ENCODE measurements at regions of chr6 and their contacts with region 1.

Region 1: DNA sequence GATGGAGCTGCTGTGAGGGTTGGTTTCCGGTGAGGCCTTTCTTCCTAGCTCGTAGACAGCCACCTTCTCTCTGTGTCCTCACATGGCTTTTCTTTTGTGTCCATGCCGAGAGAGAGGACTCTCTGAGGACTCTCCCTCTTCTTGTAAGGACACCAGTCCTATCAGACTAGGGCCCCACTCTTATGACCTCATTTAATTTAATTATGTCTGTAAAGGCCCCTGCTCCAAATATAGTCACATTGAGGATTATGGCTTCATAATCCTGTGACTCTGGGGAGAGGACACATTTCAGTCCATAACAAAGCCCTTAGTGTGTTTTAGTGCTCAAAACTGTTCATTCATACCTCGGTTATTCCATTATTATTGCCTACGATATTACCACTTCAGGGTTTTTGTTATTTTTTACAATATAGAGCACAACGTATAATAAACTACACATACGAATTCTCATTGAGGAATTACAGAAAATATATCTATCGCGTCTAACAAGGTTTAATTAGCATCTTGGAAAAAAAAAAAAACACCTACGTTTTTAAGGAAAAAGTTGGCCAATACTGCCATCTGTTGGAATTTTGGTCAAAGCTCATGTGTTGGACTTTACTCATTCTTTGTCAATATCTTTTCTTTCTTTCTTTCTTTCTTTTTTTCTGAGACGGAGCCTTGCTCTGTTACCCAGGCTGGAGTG is 20.0 kb upstream of the TFAP2A start:
- DNase-seq: peak; percentile 24
- H3K4me3 ChIP-seq: peak overlapping the region in 1 of 2 experiments; percentile 45; a peak in 2 of 4 replicates
- H3K27ac ChIP-seq: no peak overlapping the region
- H3K4me1 ChIP-seq: no peaks in the 10 kb centered on the region
- H3K27me3 ChIP-seq: no peaks in the 10 kb centered on the region; the same call in 1 of the 2 replicates
- CTCF ChIP-seq: peak; percentile 83
- EP300 ChIP-seq: no peak
- RAD21 ChIP-seq: peak; percentile 73

Region 2: GRCh38 chr6:10030942-10031537 is 403.8 kb before region 1 on chr6:
- CTCF ChIA-PET with region 1: interaction called, 10 read pairs
- POLR2A ChIA-PET with region 1: no interaction called
- DNase-seq: peak; percentile 3
- H3K4me3 ChIP-seq: no peak overlapping the region
- H3K27ac ChIP-seq: no peak overlapping the region
- H3K4me1 ChIP-seq: no peaks in the 10 kb centered on the region
- H3K27me3 ChIP-seq: no peaks in the 10 kb centered on the region
- CTCF ChIP-seq: peak; percentile 70
- EP300 ChIP-seq: no peak
- RAD21 ChIP-seq: peak; percentile 44

Region 3: GRCh38 chr6:10177703-10178102 is 257.1 kb before region 1 on chr6:
- CTCF ChIA-PET with region 1: no interaction called
- POLR2A ChIA-PET with region 1: no interaction called
- DNase-seq: no peak
- H3K4me3 ChIP-seq: no peak overlapping the region
- H3K27ac ChIP-seq: no peak overlapping the region
- H3K4me1 ChIP-seq: no peaks in the 10 kb centered on the region
- H3K27me3 ChIP-seq: no peaks in the 10 kb centered on the region; the same call in 1 of the 2 replicates
- CTCF ChIP-seq: no peak
- EP300 ChIP-seq: no peak
- RAD21 ChIP-seq: no peak

Region 4: GRCh38 chr6:10414766-10415592 is 19.9 kb before region 1 on chr6 and contains the start of gene TFAP2A:
- CTCF ChIA-PET with region 1: interaction called, 11 read pairs
- POLR2A ChIA-PET with region 1: no interaction called
- DNase-seq: no peak
- H3K4me3 ChIP-seq: peak within 1 kb of the TSS in 1 of 2 experiments; percentile 32; a peak in 1 of 4 replicates
- H3K27ac ChIP-seq: no peak within 1 kb of the TSS
- H3K4me1 ChIP-seq: peaks cover 0 to 2% of the 10 kb centered on the region in 2 experiments; a peak in 2 of 4 replicates
- H3K27me3 ChIP-seq: peaks cover 94% of the 10 kb centered on the region
- CTCF ChIP-seq: peak; percentile 23
- EP300 ChIP-seq: no peak
- RAD21 ChIP-seq: no peak
- polyA plus RNA-seq, gene TFAP2A: 0.02 and 0.07 TPM in 2 replicates

Region 5: DNA sequence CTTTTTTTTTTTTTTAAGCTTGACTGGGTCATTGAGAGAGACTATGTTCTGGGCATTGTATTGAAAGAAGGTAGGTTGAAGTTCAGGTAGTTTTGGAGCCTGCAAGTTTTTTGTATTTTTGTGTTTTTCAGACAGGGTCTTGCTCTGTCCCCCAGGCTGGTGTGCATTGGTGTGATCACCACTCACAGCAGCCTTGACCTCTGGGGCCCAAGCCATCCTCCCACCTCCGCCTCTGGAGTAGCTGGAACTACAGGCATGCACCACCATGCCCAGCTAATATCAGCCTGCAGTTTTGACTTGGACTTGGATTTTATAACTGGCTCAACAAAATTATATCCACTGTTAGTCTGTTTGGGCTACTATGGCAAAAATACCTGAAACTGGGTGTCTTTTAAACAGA is 11.7 kb after region 1 on chr6:
- CTCF ChIA-PET with region 1: interaction called, 13 read pairs
- POLR2A ChIA-PET with region 1: no interaction called
- DNase-seq: no peak
- H3K4me3 ChIP-seq: no peak overlapping the region
- H3K27ac ChIP-seq: no peak overlapping the region
- H3K4me1 ChIP-seq: peaks cover 0 to 3% of the 10 kb centered on the region in 2 experiments; a peak in 1 of 4 replicates
- H3K27me3 ChIP-seq: no peaks in the 10 kb centered on the region
- CTCF ChIP-seq: no peak
- EP300 ChIP-seq: no peak
- RAD21 ChIP-seq: no peak

Region 6: DNA sequence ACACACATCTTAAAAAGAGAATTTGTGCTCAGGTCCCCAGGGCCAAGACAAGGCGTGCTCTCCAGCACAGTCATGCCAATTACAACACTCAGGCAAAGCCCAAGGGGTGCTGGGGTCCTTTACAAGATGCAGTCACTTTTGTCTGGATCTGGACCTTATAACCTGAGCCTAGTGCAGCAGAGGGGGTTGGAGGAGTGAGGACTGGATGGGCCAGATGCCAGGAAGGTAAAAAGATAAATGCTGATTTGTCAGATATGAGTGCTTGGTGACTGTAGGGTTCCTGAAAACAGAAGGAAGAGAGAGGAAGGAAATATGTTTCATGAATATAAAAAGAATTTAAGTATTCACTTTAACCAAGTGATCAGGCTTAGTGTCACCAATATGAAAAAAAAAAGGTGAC is 23.4 kb after region 1 on chr6:
- CTCF ChIA-PET with region 1: no interaction called
- POLR2A ChIA-PET with region 1: no interaction called
- DNase-seq: no peak
- H3K4me3 ChIP-seq: no peak overlapping the region
- H3K27ac ChIP-seq: no peak overlapping the region
- H3K4me1 ChIP-seq: no peaks in the 10 kb centered on the region
- H3K27me3 ChIP-seq: no peaks in the 10 kb centered on the region; the same call in 1 of the 2 replicates
- CTCF ChIP-seq: no peak
- EP300 ChIP-seq: no peak
- RAD21 ChIP-seq: no peak